Common myeloid progenitor, CD34-positive (primary cell): ENCODE measurements at regions of chr16 and their contacts with region 1.

Region 1: DNA sequence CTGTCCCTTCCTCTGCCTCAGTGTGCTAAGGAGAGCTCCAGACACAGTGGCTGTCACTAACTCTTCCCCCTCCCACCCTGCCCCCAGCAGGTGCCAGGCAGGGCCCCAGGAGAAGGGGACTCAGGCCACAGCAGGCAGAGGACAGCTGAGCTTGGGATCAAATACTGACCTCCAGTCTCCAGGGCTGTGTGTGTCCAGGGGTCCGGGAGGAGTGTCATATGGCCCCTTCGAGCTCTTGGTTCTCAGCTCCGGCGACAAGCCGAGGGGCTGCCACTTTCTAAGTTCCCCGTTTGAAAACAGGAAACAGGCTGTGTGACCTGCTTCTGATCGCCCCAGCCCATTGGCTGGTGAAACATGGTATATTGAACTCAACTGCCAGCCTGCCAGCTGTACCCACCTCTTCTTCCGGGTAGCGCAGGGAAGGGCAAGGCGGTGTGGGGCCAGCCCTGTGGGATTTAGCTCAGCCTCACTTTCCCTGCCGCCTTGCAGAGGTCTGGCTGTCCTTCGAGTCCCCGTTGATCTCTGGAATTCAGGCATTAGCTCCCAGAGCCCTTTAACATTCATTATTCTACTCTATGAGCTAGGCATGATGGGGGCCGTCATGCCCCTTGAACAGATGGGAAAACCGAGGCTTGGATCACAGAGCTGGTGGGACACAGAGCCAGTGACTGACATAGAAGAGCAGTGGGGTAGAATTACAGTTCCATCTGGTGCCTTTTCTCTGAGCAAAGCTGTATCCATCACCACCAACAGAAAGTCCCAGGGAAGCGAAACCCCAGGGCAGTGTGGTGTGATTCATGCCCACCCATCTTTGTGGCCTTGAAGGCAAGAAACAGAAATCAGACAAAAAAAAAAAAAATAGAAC is at the start of gene SNX20:
- DNase-seq: peak; percentile 53 to 86 (median 80)
- H3K4me3 ChIP-seq: peak within 1 kb of the TSS; percentile 34 to 91 (median 83)
- H3K27ac ChIP-seq: peak within 1 kb of the TSS; percentile 83 to 89
- H3K4me1 ChIP-seq: peaks cover 39 to 80% (median 74%) of the 10 kb centered on the region in 4 experiments
- H3K27me3 ChIP-seq: no peaks in the 10 kb centered on the region

Region 2: DNA sequence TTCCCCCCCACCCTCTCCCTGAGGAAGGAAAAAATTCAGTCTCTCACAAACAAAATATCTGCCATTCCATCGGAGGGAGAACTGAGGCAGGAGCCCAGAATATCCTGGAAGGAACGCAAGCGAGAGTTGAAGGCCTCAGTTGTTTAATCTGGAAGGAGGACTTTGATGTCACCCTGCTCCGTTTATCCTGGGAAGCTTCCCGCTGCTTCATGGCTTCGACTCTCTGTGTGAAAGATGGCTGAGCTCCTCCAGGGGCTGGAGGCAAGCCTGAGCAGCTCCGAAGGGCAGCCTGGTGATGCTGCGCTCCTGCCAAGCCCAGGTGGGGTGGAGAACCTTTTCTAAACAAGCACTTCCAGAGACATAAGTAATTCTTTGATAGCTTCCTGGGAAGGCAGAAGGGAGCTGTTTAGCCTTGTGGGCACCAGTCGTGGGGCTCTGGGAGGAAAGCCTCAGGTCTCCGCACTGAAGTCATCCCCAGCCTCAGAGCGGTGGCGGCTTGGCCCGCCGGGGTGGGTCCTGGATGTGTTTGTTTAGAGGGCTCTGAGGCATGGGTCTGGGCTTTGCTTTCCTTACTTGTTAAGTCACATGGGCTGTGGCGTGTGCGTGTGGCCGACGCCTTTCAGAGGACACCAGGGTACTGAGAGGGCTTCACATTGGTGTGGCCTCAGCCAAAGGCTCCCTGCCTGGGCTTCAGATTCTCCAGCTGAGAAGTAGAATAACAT is 125.1 kb before region 1 on chr16:
- CTCF ChIA-PET with region 1: no interaction called
- POLR2A ChIA-PET with region 1: no interaction called
- DNase-seq: no peak
- H3K4me3 ChIP-seq: no peak overlapping the region
- H3K27ac ChIP-seq: no peak overlapping the region
- H3K4me1 ChIP-seq: no peaks in the 10 kb centered on the region
- H3K27me3 ChIP-seq: peaks cover 0 to 9% (median 2%) of the 10 kb centered on the region in 5 experiments

Region 3: GRCh38 chr16:50603206-50604064 is 77.8 kb before region 1 on chr16:
- CTCF ChIA-PET with region 1: no interaction called
- POLR2A ChIA-PET with region 1: no interaction called
- DNase-seq: no peak
- H3K4me3 ChIP-seq: no peak overlapping the region
- H3K27ac ChIP-seq: no peak overlapping the region
- H3K4me1 ChIP-seq: peaks cover 0 to 8% (median 3%) of the 10 kb centered on the region in 4 experiments
- H3K27me3 ChIP-seq: no peaks in the 10 kb centered on the region

Region 4: GRCh38 chr16:50653633-50654519 is 27.4 kb before region 1 on chr16:
- CTCF ChIA-PET with region 1: no interaction called
- POLR2A ChIA-PET with region 1: no interaction called
- DNase-seq: no peak
- H3K4me3 ChIP-seq: no peak overlapping the region
- H3K27ac ChIP-seq: no peak overlapping the region
- H3K4me1 ChIP-seq: no peaks in the 10 kb centered on the region
- H3K27me3 ChIP-seq: no peaks in the 10 kb centered on the region

Region 5: DNA sequence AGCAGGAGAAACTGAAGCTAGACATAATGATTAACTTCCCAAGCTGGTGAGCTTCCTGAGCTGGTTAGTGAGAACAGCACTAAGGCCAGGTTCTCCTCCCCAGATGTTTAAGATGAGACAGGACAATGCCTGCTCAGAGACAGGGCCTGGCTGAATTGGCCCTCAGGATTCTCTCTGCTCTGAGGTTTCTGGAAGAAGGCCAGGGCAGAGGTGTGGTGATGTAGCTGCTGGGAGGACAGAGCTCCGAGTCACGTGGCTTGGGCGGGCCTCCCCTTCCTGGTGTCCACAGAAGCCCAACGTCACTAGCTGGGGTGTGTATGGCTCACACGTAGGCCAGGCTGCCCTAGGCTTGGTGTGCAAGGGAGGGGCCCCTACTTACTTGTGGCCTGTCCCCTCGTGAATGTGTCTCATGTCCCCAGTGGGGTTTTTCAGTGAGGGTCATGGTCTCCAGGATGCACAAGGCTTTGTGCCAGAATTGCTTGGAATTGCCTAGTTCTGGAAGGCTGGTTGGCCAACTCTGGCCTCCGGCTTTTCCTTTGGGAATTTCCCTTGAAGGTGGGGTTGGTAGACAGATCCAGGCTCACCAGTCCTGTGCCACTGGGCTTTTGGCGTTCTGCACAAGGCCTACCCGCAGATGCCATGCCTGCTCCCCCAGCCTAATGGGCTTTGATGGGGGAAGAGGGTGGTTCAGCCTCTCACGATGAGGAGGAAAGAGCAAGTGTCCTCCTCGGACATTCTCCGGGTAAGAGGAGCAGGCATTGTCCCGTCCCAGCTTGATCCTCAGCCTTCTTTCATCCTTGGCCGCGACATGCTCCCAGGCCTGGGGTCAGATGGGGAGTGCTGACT is 15.5 kb after region 1 on chr16:
- CTCF ChIA-PET with region 1: interaction called, 12 read pairs
- POLR2A ChIA-PET with region 1: interaction called, 6 read pairs
- DNase-seq: peak in 2 of 3 donors; percentile 64 to 70
- H3K4me3 ChIP-seq: no peak overlapping the region
- H3K27ac ChIP-seq: peak overlapping the region in 1 of 2 experiments; percentile 39
- H3K4me1 ChIP-seq: peaks cover 2 to 54% (median 43%) of the 10 kb centered on the region in 4 experiments
- H3K27me3 ChIP-seq: no peaks in the 10 kb centered on the region

Region 6: GRCh38 chr16:50741808-50742575 is 60.7 kb after region 1 on chr16 and contains the start of gene CYLD:
- CTCF ChIA-PET with region 1: interaction called, 21 read pairs
- POLR2A ChIA-PET with region 1: interaction called, 4 read pairs
- DNase-seq: peak; percentile 99 to 100 (median 100)
- H3K4me3 ChIP-seq: peak within 1 kb of the TSS; percentile 53 to 91 (median 80)
- H3K27ac ChIP-seq: peak within 1 kb of the TSS; percentile 91 to 92
- H3K4me1 ChIP-seq: peaks cover 30 to 55% (median 41%) of the 10 kb centered on the region in 4 experiments
- H3K27me3 ChIP-seq: no peaks in the 10 kb centered on the region